ENCODE measurements at regions of chr3 and their contacts with region 1.

Region 1: DNA sequence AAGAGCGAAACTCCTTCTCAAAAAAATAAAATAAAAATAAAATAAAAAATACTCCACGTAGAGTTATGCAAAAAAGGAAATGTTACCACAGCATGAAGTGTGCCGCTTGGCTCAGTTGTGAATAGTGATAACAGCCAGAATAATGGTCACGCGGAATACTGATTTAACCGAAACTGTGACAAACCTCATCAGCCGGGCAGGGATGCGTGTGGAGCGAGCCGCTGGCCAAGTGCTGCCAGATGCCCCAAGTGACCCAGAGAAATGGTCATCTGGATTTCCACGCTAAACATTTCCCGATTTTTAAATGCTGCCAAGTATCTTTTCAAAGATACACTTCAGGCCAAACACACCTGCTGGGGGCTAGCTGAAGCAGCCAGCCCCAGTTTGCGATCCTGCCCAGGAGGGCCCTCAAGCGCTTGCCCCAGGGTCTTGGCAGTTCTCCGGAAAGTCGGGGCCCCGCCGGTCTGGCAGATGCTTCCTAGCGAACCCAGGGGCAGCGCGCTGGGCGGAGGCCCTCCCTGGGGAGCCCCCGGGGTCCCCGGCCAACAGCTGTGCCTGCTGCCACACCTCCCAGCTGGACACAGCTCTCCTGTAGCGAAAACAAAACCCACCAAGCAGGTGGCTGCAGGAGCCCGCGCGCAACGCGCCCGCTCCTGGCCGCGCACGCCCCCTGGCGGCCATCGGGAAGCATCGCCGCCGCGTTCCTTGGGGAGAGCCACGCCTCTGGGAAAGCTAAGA is 35.1 kb downstream of the CMTM6 start:
- DNase-seq: peak; percentile 91
- H3K4me3 ChIP-seq: no peak overlapping the region; a peak in 1 of 4 replicates
- H3K27ac ChIP-seq: no peak overlapping the region
- H3K4me1 ChIP-seq: peaks cover 0 to 13% of the 10 kb centered on the region in 2 experiments; a peak in 3 of 4 replicates
- H3K27me3 ChIP-seq: no peaks in the 10 kb centered on the region
- CTCF ChIP-seq: peak; percentile 87
- EP300 ChIP-seq: no peak
- RAD21 ChIP-seq: peak; percentile 83

Region 2: GRCh38 chr3:32374788-32375595 is 92.5 kb before region 1 on chr3:
- CTCF ChIA-PET with region 1: interaction called, 98 read pairs
- POLR2A ChIA-PET with region 1: interaction called, 3 read pairs
- DNase-seq: peak; percentile 53
- H3K4me3 ChIP-seq: no peak overlapping the region; a peak in 1 of 4 replicates
- H3K27ac ChIP-seq: no peak overlapping the region
- H3K4me1 ChIP-seq: no peaks in the 10 kb centered on the region
- H3K27me3 ChIP-seq: no peaks in the 10 kb centered on the region
- CTCF ChIP-seq: peak; percentile 72
- EP300 ChIP-seq: no peak
- RAD21 ChIP-seq: peak; percentile 67

Region 3: DNA sequence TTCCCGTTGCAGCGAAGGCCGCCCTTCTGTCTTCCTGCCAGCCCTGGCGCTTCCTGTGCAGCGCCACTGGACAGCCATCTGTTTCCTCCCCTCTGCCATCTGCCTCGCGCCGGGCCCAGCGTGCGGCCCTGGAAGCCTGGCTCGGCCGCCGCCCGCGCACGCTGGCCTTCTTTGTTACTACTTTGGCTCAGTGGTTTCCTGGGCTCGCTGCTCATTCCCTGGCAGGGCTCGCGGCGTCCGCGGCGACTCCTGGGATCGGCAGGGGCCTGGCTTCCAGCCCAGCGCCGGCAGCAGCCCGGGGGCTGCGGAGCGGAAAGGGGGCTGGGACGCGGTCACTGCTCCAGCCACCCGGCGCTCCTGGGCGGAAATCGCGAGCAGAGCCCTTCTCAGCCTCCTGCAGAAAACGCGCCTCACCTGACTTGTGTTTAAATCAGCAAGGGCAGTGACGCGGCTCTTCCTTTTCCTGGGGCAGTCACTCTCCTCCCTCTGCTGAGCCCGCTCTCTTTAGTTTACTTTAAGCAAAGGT is 65.9 kb before region 1 on chr3:
- CTCF ChIA-PET with region 1: interaction called, 14 read pairs
- POLR2A ChIA-PET with region 1: interaction called, 4 read pairs
- DNase-seq: peak; percentile 91
- H3K4me3 ChIP-seq: peak overlapping the region; percentile 40 to 54
- H3K27ac ChIP-seq: peak overlapping the region; percentile 76 to 97
- H3K4me1 ChIP-seq: peaks cover 7 to 8% of the 10 kb centered on the region in 2 experiments; a peak in 3 of 4 replicates
- H3K27me3 ChIP-seq: no peaks in the 10 kb centered on the region
- CTCF ChIP-seq: no peak
- EP300 ChIP-seq: no peak
- RAD21 ChIP-seq: no peak

Region 4: GRCh38 chr3:32421991-32422859 is 45.3 kb before region 1 on chr3:
- CTCF ChIA-PET with region 1: interaction called, 13 read pairs
- POLR2A ChIA-PET with region 1: no interaction called
- DNase-seq: peak; percentile 43
- H3K4me3 ChIP-seq: no peak overlapping the region
- H3K27ac ChIP-seq: peak overlapping the region; percentile 73 to 92
- H3K4me1 ChIP-seq: peaks cover 29 to 33% of the 10 kb centered on the region in 2 experiments
- H3K27me3 ChIP-seq: no peaks in the 10 kb centered on the region
- CTCF ChIP-seq: no peak
- EP300 ChIP-seq: peak; percentile 51 to 95; a peak in 2 of 4 replicates
- RAD21 ChIP-seq: no peak

Region 5: GRCh38 chr3:32448686-32449474 is 18.6 kb before region 1 on chr3:
- CTCF ChIA-PET with region 1: interaction called, 52 read pairs
- POLR2A ChIA-PET with region 1: no interaction called
- DNase-seq: no peak
- H3K4me3 ChIP-seq: no peak overlapping the region
- H3K27ac ChIP-seq: no peak overlapping the region
- H3K4me1 ChIP-seq: peaks cover 0 to 3% of the 10 kb centered on the region in 2 experiments; a peak in 3 of 4 replicates
- H3K27me3 ChIP-seq: no peaks in the 10 kb centered on the region
- CTCF ChIP-seq: no peak
- EP300 ChIP-seq: no peak
- RAD21 ChIP-seq: no peak

Region 6: GRCh38 chr3:32493437-32494414 is 26.2 kb after region 1 on chr3:
- CTCF ChIA-PET with region 1: interaction called, 19 read pairs
- POLR2A ChIA-PET with region 1: no interaction called
- DNase-seq: no peak
- H3K4me3 ChIP-seq: no peak overlapping the region
- H3K27ac ChIP-seq: 0 out of 4 replicates have a peak overlapping the region, but pooled peaks of 1 of the 2 experiments have one; percentile 19
- H3K4me1 ChIP-seq: peaks cover 2 to 10% of the 10 kb centered on the region in 2 experiments; a peak in 2 of 4 replicates
- H3K27me3 ChIP-seq: no peaks in the 10 kb centered on the region
- CTCF ChIP-seq: no peak
- EP300 ChIP-seq: no peak
- RAD21 ChIP-seq: no peak

Measured in SK-N-SH (cell line).